Sigmoid colon (tissue), 7 donors: ENCODE measurements at regions of chr12 and their contacts with region 1.

Region 1: GRCh38 chr12:111396726-111397445 is 8.8 kb upstream of the SH2B3 start:
- DNase-seq: peak; percentile 91
- H3K4me3 ChIP-seq: peak overlapping the region; percentile 6 to 40 (median 23)
- H3K27ac ChIP-seq: peak overlapping the region; percentile 41 to 74 (median 60)
- H3K4me1 ChIP-seq: peaks cover 0 to 26% (median 16%) of the 10 kb centered on the region in 4 donors
- H3K27me3 ChIP-seq: no peaks in the 10 kb centered on the region
- CTCF ChIP-seq: peak; percentile 95 to 99 (median 98)
- EP300 ChIP-seq: no peak
- POLR2A ChIP-seq: no peak

Region 2: GRCh38 chr12:111355201-111355925 is 41.5 kb before region 1 on chr12:
- intact Hi-C with region 1: no loop called
- DNase-seq: no peak
- H3K4me3 ChIP-seq: no peak overlapping the region
- H3K27ac ChIP-seq: no peak overlapping the region
- H3K4me1 ChIP-seq: no peaks in the 10 kb centered on the region
- H3K27me3 ChIP-seq: no peaks in the 10 kb centered on the region
- CTCF ChIP-seq: no peak
- EP300 ChIP-seq: no peak
- POLR2A ChIP-seq: no peak

Region 3: DNA sequence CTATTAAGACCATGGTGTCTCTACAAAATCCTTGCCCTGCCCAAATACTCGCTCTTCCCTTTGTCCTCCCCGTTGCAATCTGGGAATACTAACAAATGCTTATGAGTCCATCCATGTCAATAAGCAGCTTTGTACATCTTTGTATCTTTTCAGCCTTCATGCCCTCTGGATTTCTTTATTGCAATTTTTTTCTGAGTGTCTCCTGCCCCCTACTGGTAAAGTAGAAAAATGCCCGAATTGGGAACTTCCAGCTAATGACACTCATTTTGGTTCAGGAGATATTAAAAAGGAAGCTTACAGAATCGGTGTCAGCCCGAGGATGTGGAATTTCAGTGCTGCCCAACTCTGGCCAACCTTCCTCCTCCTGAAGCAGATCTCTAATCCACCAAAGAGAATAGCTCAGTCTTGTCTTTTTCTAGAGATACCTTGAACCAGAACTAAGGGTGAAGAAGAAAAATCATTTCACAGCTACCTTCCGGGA is 54.8 kb after region 1 on chr12:
- intact Hi-C with region 1: loop called (anchors 1 kb)
- DNase-seq: peak; percentile 22
- H3K4me3 ChIP-seq: no peak overlapping the region
- H3K27ac ChIP-seq: peak overlapping the region in 1 of 4 donors; percentile 2
- H3K4me1 ChIP-seq: peaks cover 0 to 12% (median 5%) of the 10 kb centered on the region in 4 donors
- H3K27me3 ChIP-seq: no peaks in the 10 kb centered on the region
- CTCF ChIP-seq: peak; percentile 73 to 88 (median 78)
- EP300 ChIP-seq: no peak
- POLR2A ChIP-seq: no peak